ENCODE measurements at regions of chr11 and their contacts with region 1.

Region 1: DNA sequence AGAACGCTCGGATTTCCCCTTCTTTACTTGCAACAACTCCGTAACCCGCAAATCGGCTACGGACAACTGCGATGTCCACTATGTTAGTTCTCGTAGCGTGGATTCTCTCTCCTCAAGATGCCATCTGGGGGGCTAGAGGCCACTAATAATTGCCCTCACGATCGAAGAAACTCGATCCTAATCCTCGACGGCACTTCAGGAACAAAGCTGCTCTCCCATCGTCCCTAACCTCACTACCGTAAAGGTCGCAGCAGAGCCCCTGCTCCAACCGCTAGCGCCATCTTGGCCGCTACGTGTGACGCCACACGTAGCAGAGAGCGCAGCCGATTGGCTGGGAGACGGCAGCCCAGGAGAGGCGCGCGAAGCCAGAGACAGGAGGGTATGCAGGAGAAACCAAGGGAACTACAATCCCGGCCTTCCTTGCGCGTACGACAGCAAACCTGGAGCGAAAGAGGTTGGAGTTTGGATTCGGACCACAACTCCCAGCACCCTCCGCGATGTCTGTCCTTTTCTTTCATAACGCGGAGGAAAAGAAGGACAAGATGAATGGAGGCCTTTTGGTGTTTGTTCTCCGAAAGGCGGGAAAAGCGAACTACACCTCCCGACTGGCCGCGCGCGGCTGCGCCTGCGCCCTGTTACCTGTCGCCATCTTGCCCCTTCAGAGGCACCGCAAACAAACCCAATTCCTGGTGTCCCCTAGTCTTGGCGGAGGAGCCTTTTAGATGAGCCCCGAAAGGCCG is at the start of gene EMSY:
- DNase-seq: peak; percentile 99
- ATAC-seq: peak; percentile 95
- H3K4me3 ChIP-seq: peak within 1 kb of the TSS; percentile 98
- H3K27ac ChIP-seq: peak within 1 kb of the TSS; percentile 95
- H3K4me1 ChIP-seq: no peaks in the 10 kb centered on the region; the same call in 1 of the 2 replicates
- H3K27me3 ChIP-seq: no peaks in the 10 kb centered on the region
- CTCF ChIP-seq: no peak
- EP300 ChIP-seq: no peak
- POLR2A ChIP-seq: peak; percentile 100
- RAD21 ChIP-seq: no peak
- polyA plus RNA-seq, gene EMSY: 9.3 to 9.8 TPM

Region 2: DNA sequence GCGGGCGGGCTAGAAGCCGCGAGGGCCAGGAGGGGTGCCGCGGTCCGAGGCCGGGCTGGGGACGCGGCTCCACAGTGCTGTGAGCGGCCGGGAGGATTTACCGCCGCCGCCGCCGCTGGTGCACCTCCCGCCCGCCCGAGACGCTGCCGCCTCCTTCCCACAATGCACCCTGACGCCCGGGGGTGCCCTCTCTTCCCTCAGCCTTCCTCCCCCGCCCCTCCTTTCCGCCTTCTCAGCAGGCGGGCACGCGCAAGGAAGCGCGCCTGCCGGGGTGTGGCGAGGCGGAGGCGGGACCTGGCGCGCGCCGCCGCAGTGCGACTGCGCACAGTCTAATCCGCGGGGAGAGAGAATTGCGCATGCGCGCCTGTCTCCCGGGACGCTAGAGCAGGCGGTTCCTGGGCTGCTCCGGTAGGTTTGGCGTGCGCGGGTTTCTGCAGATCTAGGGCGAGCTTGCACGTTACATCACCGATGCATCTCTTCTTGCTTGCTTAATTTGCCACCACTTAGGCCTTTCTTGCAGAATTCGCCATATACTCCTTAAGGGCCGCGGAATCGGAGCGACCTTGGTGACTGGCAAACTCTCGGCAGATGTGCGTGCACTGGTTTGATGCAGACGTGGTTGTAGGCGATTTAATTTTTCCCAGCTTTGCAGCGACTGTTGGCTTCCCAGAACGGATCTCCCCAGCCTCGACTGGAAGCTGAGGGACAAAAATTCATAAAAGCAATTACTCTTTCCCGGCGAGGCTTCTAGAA is 63.4 kb before region 1 on chr11 and contains the starts of genes GVQW3 and THAP12:
- CTCF ChIA-PET with region 1: interaction called, 3 read pairs
- POLR2A ChIA-PET with region 1: interaction called, 3 read pairs
- RAD21 ChIA-PET with region 1: interaction called, 3 read pairs
- SMC1A ChIA-PET with region 1: interaction called, 4 read pairs
- in situ Hi-C with region 1: no loop called
- intact Hi-C with region 1: loop called (anchors 2 kb)
- DNase-seq: peak; percentile 91
- ATAC-seq: peak; percentile 91
- H3K4me3 ChIP-seq: peak within 1 kb of the TSS; percentile 71
- H3K27ac ChIP-seq: 0 out of 2 replicates have a peak within 1 kb of the TSS, but pooled peaks have one; percentile 7
- H3K4me1 ChIP-seq: peaks cover 22% of the 10 kb centered on the region
- H3K27me3 ChIP-seq: no peaks in the 10 kb centered on the region
- CTCF ChIP-seq: peak; percentile 17 to 50 (median 20); a peak in 3 of 6 replicates
- EP300 ChIP-seq: no peak
- POLR2A ChIP-seq: peak; percentile 72
- RAD21 ChIP-seq: no peak
- polyA plus RNA-seq, gene GVQW3: 0.13 to 0.75 TPM
- polyA plus RNA-seq, gene THAP12: 12.6 to 15.0 TPM